ENCODE measurements at regions of chr11 and their contacts with region 1.

Region 1: DNA sequence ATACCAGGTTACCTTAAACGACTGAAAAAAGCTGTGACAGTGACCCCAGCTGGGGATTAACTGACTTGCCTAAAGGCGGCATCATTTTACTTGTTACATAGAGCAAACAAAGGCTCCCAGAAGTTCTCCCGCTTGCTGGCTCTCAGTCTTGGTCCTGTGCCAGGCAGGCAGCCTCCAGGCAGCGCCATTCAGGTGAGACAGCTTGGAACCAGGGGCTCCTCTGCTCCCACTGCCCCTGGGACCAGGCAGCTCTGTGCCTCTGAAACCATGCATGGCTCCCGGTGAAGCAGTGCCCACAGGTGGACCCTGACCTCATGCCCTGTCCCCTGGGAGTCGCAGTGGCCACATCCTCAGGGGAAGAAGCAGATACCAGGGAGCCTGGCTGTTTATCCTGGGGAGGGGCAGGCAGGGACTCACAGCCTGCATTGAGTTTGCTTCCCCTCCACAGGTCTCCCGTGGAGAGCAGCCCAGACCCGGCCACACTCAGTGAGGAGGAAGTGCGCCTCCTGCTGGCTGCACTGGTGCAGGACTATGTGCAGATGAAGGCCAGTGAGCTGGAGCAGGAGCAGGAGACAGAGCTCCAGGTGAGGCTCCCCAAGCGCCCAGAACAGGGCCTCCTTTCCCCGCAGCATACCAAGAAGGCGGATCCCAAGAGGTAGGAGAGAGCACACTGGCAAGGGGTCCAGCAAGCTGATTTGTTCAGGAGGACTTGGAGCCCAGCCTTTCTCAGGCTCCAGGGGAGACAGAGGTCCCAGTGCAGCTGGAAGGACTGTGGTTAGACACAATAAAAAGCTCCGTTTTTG is 15.6 kb upstream of the CYP2R1 start:
- DNase-seq: no peak
- CTCF ChIP-seq: peak; percentile 88

Region 2: DNA sequence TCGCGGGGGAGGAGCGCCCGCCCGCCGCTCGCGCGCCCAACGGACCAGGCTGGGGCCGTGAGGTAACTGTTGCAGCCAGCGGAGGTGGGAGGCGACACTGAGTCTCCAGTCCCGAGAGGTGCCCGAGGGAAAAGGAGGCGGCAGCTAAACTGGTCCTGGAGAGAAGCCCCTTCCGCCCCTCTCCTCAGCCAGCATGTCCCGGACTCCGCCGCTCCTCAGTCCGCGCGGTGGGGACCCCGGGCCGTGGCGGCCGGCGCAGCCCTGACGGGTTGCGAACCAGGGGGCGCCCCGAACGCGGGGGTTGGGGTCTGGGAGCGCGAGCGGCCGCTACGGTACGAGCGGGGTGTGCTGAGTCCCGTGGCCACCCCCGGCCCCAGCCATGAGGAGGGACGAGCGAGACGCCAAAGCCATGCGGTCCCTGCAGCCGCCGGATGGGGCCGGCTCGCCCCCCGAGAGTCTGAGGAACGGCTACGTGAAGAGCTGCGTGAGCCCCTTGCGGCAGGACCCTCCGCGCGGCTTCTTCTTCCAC is 263.9 kb before region 1 on chr11 and contains the start of gene PDE3B:
- CTCF ChIA-PET with region 1: interaction called, 25 read pairs
- POLR2A ChIA-PET with region 1: no interaction called
- DNase-seq: peak; percentile 64
- CTCF ChIP-seq: peak; percentile 36

Region 3: GRCh38 chr11:14698771-14699170 is 208.8 kb before region 1 on chr11:
- CTCF ChIA-PET with region 1: no interaction called
- POLR2A ChIA-PET with region 1: no interaction called
- DNase-seq: no peak
- CTCF ChIP-seq: no peak

Region 4: GRCh38 chr11:14789879-14790484 is 117.6 kb before region 1 on chr11:
- CTCF ChIA-PET with region 1: interaction called, 213 read pairs
- POLR2A ChIA-PET with region 1: interaction called, 3 read pairs
- DNase-seq: no peak
- CTCF ChIP-seq: peak; percentile 44

Region 5: GRCh38 chr11:14892036-14892567 is 15.5 kb before region 1 on chr11 and contains the start of gene CYP2R1:
- CTCF ChIA-PET with region 1: interaction called, 148 read pairs
- POLR2A ChIA-PET with region 1: interaction called, 13 read pairs
- DNase-seq: peak; percentile 91
- CTCF ChIP-seq: no peak

Region 6: DNA sequence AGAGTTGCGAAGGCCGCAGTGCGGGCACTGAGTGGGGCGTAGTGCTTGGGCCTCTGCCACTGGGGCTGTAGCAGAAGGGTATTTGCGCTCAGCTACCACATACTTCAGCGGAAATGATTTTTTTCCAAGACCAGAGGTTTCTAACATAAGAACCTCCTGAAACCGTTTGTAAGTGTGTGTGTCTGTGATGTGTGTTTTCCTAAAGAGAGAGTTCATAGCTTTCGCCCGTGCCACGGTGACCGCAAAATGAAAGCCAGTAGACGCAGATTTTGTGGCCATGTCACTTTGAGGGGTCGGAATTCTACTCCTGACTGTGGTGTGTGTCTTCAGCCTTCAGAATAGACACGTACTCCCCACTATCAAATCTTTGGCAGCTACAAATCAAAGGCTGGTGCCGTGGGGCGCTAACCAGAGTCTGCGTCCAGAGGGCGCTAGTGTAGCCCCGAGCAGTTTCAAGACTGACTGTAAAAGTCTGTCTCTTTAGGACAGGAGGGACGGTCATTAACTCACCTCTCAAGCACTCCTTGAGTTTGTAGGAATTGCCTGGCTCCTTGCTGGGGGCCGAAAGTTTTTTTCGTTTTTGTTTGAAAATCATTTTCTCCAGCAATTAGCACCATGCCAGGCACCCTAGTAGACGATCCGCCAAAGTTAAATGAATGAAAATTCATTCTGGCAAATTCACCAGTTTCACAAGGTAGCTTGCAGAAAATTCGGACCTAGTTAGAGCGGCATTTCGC is 67.1 kb after region 1 on chr11:
- CTCF ChIA-PET with region 1: interaction called, 14 read pairs
- POLR2A ChIA-PET with region 1: no interaction called
- DNase-seq: peak; percentile 40
- CTCF ChIP-seq: peak; percentile 60

Region 7: DNA sequence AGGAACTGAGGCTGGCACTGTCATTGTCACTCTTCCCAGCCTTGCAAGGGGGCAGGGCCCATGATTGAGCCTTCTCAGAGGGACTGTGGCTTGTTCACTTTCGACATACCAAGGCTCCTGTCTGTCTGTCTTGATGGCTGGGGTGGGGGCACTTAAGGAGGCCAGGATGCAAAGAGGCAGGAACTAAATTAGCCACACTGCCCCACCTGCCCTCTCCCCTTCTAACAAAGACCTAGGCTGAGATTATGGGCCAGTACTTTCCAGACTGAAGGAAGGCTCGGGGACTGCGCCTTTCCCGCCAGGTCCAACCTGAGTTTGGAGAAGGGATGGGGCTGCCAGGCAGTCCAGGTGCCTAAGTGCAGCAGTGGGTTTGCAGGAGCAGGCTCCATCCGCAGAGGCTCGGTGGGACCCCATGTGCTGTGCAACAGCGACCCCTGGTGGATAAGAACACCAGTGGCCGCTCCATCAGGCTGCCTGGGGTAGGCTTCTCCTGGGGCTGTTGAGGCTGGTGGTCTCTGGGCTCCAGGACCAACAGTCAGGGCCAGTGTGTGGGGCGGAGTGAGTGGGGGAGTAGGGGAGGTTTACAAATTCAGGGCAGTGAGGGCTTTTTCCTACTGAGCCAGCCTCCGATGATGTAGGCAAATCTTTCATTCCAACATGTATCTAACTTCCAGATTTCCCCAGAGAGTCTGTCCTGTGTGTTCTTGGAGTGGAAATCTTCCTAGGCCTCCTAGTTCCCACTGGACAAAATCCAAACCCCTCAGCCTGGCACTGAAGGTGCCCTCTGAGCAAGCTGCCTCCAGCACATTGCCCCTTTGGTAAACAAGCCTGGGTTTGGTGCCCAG is 301.0 kb after region 1 on chr11:
- CTCF ChIA-PET with region 1: interaction called, 48 read pairs
- POLR2A ChIA-PET with region 1: no interaction called
- DNase-seq: peak; percentile 84
- CTCF ChIP-seq: peak; percentile 94

Measured in GM10248 (cell line).